Motor neuron (in vitro differentiated cells): ENCODE measurements at regions of chr11 and their contacts with region 1.

Region 1: GRCh38 chr11:107799218-107799859 is 59.2 kb downstream of the SLC35F2 start:
- ATAC-seq: peak in 5 of 8 experiments; percentile 51 to 75 (median 73)
- H3K4me3 ChIP-seq: no peak overlapping the region
- H3K27ac ChIP-seq: no peak overlapping the region
- H3K4me1 ChIP-seq: no peaks in the 10 kb centered on the region

Region 2: GRCh38 chr11:107549253-107549953 is 249.9 kb before region 1 on chr11:
- in situ Hi-C with region 1: no loop called
- ATAC-seq: peak in 2 of 8 experiments; percentile 25 to 32
- H3K4me3 ChIP-seq: no peak overlapping the region
- H3K27ac ChIP-seq: no peak overlapping the region
- H3K4me1 ChIP-seq: no peaks in the 10 kb centered on the region

Region 3: DNA sequence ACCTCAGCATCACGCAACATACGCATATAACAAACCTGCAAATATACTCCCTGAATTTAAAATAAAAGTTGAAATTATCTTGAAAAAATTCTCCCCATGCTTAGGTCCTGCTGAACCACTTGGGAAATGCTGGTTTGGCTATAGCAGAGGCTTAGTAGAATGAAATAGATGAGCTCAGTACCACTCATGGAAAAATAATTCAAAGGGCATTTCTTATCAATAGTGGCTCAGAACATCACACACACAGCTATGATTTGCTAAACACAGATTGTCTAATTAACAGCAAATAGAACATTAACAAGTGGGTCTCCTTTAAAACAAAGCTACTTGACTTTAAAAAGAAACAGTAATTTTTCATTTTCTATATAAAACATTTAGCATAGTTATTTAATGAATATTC is 186.9 kb before region 1 on chr11:
- in situ Hi-C with region 1: no loop called
- ATAC-seq: no peak
- H3K4me3 ChIP-seq: no peak overlapping the region
- H3K27ac ChIP-seq: no peak overlapping the region
- H3K4me1 ChIP-seq: no peaks in the 10 kb centered on the region

Region 4: DNA sequence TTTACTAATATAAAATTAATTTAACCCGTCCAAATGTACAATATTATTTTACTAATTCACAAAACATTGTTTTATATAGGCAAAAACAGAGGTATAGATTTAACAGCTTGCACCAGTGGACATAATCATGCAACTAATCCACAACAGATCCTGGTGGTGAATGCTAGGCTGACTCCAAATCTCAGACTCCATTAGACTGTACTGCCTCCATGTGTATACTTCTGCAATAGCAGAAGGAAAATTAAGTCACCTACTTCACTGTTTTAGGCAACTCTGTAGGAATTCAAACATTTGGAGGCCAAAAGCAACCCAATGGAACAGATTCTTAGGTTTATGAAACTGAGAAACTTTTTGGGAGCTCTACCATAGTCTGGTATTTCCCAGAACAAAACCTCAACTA is 98.9 kb after region 1 on chr11:
- in situ Hi-C with region 1: loop called in 1 of 9 experiments (anchors 25 kb)
- ATAC-seq: peak in 4 of 8 experiments; percentile 34 to 75 (median 64)
- H3K4me3 ChIP-seq: no peak overlapping the region
- H3K27ac ChIP-seq: no peak overlapping the region
- H3K4me1 ChIP-seq: no peaks in the 10 kb centered on the region